Activated CD4-positive, alpha-beta T cell treated with anti-CD3 and anti-CD28 coated beads, Interleukin-2, amount 10 ng/mL, durations not matched to agents 24 days and 14 days (primary cell): ENCODE measurements at regions of chr2 and their contacts with region 1.

Region 1: GRCh38 chr2:28566521-28567041 is 70.7 kb downstream of the PLB1 start:
- DNase-seq: peak; percentile 97
- H3K4me3 Mint-ChIP-seq: peak overlapping the region; percentile 86
- H3K27ac Mint-ChIP-seq: peak overlapping the region; percentile 72
- H3K4me1 Mint-ChIP-seq: peaks cover 17% of the 10 kb centered on the region
- H3K27me3 Mint-ChIP-seq: peaks cover 7% of the 10 kb centered on the region

Region 2: DNA sequence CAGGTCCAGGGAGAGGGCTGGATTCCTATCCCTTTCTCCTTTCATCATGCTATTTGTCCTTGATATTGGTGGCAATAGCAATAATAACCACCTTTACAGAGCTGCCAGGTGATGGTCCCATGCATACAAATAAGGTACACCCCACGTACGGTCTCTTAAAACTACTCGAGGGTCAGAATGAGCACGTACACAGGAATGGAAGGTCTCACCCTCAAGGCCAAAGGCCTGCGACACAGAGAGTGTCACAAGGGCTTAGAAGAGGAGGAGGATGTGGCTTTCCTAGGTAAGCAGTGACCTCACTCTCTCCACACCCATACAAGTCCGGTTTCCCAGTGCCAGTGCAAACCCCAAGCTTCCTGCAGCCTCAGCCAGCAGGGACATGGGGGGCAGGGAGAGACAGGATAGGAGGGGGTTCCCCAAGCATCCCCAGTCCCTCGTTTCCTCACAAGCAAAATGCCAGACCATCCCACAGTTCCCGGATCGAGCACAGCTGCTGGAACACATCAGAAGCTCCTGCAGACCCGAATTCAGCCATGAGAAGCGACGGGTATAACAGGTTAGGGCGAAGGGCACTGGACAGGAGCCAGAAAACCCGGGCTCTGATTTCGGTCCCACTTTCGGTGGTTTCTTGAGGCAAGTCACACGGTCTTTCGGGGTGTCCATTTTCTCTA is 21.5 kb before region 1 on chr2:
- intact Hi-C with region 1: loop called (anchors 2 kb)
- DNase-seq: peak; percentile 81
- H3K4me3 Mint-ChIP-seq: peak overlapping the region; percentile 65
- H3K27ac Mint-ChIP-seq: peak overlapping the region; percentile 86
- H3K4me1 Mint-ChIP-seq: peaks cover 34% of the 10 kb centered on the region
- H3K27me3 Mint-ChIP-seq: no peaks in the 10 kb centered on the region

Region 3: DNA sequence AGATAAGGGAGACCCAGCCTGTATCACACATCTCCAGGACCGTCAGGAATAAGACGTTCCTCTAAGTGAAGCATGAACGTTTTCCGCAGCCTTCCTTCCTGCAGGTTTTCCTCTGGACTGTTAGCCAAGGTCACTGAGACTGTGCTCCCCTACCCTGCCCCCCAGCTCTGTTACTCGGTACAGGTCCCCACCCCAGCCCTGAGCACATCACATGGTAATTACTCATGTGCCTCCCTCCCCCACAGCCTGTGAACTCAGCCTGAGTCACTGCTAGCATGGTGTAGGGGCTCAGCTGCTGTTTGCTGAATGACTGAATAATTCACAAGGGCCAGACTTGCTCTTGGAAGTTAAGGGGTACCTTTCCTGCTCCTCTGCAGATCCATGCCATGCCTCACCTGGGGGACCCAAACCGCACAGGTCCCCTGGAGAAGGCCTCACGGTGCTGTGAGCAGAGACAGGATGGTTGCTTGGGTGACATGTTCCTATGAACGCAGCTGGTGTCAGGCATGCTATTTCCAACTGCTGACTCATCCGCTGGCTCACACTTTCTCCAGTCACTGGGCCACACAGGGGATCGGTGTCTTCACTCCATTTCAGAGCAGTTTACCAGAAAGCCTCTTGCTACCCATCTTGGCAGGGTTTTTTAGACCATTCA is 17.4 kb after region 1 on chr2:
- intact Hi-C with region 1: loop called (anchors 2 kb)
- DNase-seq: peak; percentile 82
- H3K4me3 Mint-ChIP-seq: peak overlapping the region; percentile 59
- H3K27ac Mint-ChIP-seq: peak overlapping the region; percentile 81
- H3K4me1 Mint-ChIP-seq: peaks cover 48% of the 10 kb centered on the region
- H3K27me3 Mint-ChIP-seq: no peaks in the 10 kb centered on the region

Region 4: DNA sequence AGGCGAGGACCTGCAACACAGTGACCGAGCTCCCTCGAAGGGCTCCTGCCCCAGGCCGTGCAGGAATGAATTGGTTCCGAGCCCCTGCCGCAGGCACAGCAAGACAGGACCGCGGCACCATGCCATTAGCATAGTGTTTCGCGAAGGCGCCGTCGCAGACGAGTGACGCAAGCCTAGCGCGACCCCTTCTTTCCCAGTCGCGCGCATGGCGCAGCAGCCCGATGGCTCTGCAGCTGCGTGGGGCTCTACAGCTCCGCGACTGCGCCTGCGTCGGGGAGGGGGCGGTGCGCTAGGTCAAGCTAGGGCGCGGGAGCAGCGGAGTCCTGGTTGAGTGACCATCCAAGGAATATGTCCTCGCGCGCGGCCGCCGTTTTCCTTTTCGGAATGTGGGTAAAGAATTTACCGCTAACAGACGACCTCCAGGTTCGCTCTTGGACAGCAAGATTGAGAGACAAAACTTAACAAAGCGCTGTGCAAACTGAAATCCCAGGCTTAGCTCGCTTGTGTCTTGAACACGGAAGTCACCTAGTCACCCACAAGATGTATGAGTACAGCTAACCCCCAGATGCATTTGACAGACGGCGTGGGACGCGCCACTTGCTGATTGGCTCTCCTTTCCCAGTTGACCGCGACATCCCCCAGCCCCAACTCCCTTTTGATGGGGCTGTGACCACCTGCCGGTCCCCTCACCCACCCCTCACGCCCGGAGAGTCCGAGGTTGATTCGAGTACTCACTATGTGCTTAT is 303.7 kb after region 1 on chr2 and contains the start of gene TRMT61B:
- intact Hi-C with region 1: loop called (anchors 10 kb)
- DNase-seq: peak; percentile 100
- H3K4me3 Mint-ChIP-seq: peak within 1 kb of the TSS; percentile 94
- H3K27ac Mint-ChIP-seq: peak within 1 kb of the TSS; percentile 97
- H3K4me1 Mint-ChIP-seq: peaks cover 20% of the 10 kb centered on the region
- H3K27me3 Mint-ChIP-seq: peaks cover 9% of the 10 kb centered on the region
- total RNA-seq, gene TRMT61B: 18.9 and 20.1 TPM in 2 replicates

Region 5: DNA sequence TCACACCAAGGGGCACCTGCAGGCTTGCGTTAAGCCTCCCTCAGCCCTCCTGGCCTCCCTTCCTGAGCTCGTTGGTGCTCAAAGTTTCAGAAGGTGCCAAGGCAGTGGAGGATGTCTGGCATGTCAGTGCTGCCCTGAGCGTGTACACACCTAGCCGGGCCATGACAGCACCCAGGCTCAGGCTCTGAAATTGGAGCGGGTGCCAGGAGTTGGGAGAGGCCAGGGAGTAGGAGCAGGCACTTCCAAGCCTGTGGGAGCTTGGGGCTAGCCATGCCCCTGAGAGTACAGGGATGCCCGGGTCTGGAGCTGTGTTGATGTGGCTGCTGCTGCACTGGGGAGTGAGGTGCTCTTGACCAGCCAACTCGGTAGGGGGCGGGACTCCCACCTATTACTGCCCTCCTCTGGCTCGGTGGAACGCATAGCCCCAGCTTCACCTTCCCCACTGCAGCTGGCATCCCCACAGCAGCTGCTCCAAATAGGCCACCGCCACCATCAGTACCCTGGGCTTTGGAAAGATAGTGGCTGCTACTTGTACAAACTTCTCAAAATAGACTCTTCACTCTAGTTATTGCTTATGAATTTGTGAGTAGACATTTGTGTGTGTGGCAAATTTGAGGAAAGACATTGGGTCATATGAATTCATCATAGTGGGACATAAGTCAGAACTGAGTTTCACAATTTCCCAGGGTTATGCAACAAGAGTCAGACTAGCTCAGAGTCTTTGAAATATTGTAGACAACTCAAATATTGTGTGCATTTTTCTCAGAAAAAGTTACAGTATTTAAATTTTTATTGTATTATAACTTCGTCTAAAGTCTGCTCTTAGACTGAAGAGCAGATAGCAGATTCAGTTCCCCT is 514.5 kb after region 1 on chr2:
- intact Hi-C with region 1: no loop called
- DNase-seq: no peak
- H3K4me3 Mint-ChIP-seq: no peak overlapping the region
- H3K27ac Mint-ChIP-seq: no peak overlapping the region
- H3K4me1 Mint-ChIP-seq: no peaks in the 10 kb centered on the region
- H3K27me3 Mint-ChIP-seq: no peaks in the 10 kb centered on the region